Activated T-helper 1 cell treated with anti-CD3 and anti-CD28 coated beads, Interleukin-12 subunit alpha, Interleukin-12 subunit beta, Interleukin-2, Interleukin-4 antibody, amounts not matched to agents 30 ng/mL and 10 ng/mL and 1 ng/mL, durations not matched to agents 14 hours and 24 hours and 36 hours (primary cell): ENCODE measurements at regions of chr4 and their contacts with region 1.

Region 1: DNA sequence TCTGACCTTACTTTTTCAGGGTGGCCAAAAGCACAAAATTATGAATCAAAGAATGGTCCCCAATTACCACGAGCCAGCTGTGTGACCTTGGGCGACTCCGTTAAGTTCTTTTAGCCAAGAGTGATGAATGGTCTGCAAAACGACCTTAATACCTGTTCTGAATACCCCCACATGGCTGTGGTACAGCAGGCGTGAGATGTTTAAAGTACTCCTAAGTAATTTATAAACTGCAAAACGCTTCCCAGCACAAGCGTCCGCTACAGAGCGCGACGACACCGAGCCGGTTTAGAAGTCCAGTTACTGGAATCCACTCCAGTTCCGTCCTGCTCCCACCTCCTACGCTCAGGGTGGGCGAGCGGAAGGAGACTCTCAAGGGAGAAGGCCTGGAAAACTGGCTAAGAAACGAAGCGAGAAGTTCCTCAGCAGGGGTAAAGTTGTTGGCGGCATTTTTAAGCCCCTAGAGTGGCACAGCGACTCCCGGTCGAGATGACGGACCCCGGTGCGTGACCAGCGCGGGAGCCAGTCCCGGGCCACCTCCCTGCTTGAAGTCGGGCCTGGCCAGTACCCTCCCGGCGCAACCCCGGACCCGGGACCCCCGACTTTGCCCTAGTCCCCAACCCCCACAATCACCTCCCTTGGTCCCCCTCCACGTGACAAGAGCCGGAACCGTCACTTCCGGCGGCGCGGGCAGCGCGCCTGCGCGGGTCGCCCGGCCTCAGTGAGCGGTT is 683 bp upstream of the BMP2K start:
- DNase-seq: peak; percentile 86
- H3K4me3 Mint-ChIP-seq: peak overlapping the region; percentile 95
- H3K27ac Mint-ChIP-seq: peak overlapping the region; percentile 96
- H3K4me1 Mint-ChIP-seq: peaks cover 38% of the 10 kb centered on the region
- H3K27me3 Mint-ChIP-seq: no peaks in the 10 kb centered on the region

Region 2: GRCh38 chr4:77959566-77960338 is 815.7 kb before region 1 on chr4:
- intact Hi-C with region 1: loop called (anchors 10 kb)
- DNase-seq: no peak
- H3K4me3 Mint-ChIP-seq: no peak overlapping the region
- H3K27ac Mint-ChIP-seq: no peak overlapping the region
- H3K4me1 Mint-ChIP-seq: no peaks in the 10 kb centered on the region
- H3K27me3 Mint-ChIP-seq: peaks cover under 1% of the 10 kb centered on the region

Region 3: DNA sequence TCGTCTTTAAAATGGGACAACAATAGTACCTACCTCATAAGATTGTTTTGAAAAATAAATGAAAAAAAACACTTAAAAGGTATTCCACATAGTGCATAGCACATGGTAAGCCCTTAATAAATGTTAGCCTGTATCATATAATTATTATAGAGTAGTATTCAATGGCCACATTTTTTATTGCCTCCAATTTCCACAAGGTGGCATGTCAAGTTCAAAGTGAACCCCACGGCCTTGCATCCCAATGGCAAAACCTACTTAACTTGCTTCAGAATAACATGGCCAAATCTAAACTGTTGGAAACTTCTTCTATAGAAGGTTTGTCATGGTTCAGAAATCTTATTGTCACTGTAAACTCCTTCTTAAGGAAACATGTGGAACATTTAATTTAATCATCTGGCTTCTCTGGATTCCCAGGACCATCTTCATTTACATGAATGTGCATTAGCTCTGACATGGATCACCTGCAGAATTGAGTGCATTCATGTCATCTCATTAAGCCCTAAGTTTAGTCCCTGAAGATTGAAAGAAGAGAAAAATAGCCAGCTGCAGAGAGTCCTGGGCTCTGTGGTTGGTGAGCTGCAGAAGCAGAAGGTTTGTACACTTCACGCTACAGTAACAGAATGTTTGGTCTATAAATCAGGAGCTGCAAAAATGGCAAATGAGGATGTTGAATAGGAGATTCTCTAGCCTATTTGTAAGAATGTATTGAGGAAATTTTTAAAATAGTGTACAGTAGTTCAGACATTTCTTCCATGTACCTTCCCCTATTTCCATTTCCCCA is 162.9 kb before region 1 on chr4:
- intact Hi-C with region 1: loop called (anchors 1 kb)
- DNase-seq: no peak
- H3K4me3 Mint-ChIP-seq: no peak overlapping the region
- H3K27ac Mint-ChIP-seq: no peak overlapping the region
- H3K4me1 Mint-ChIP-seq: peaks cover 61% of the 10 kb centered on the region
- H3K27me3 Mint-ChIP-seq: no peaks in the 10 kb centered on the region

Region 4: GRCh38 chr4:78845472-78845871 is 70.0 kb after region 1 on chr4:
- intact Hi-C with region 1: loop called (anchors 5 kb)
- DNase-seq: no peak
- H3K4me3 Mint-ChIP-seq: no peak overlapping the region
- H3K27ac Mint-ChIP-seq: no peak overlapping the region
- H3K4me1 Mint-ChIP-seq: no peaks in the 10 kb centered on the region
- H3K27me3 Mint-ChIP-seq: no peaks in the 10 kb centered on the region

Region 5: GRCh38 chr4:78938868-78939666 is 163.6 kb after region 1 on chr4 and contains the start of gene PAQR3:
- intact Hi-C with region 1: loop called (anchors 1 kb)
- DNase-seq: peak; percentile 82
- H3K4me3 Mint-ChIP-seq: peak within 1 kb of the TSS; percentile 97
- H3K27ac Mint-ChIP-seq: peak within 1 kb of the TSS; percentile 88
- H3K4me1 Mint-ChIP-seq: peaks cover 47% of the 10 kb centered on the region
- H3K27me3 Mint-ChIP-seq: peaks cover 16% of the 10 kb centered on the region
- total RNA-seq, gene PAQR3: 19.6 and 19.8 TPM in 2 replicates